ENCODE measurements at regions of chr17 and their contacts with region 1.

Region 1: GRCh38 chr17:2282297-2282873 is 21.2 kb downstream of the SMG6 start:
- DNase-seq: no peak
- H3K4me3 ChIP-seq: no peak overlapping the region
- H3K27ac ChIP-seq: no peak overlapping the region
- H3K4me1 ChIP-seq: no peaks in the 10 kb centered on the region
- H3K27me3 ChIP-seq: no peaks in the 10 kb centered on the region
- CTCF ChIP-seq: peak; percentile 26 to 54 (median 51)
- EP300 ChIP-seq: no peak
- POLR2A ChIP-seq: no peak

Region 2: GRCh38 chr17:1908699-1909309 is 373.6 kb before region 1 on chr17:
- intact Hi-C with region 1: loop called in 2 of 4 experiments (anchors 5 kb)
- DNase-seq: peak; percentile 62 to 75 (median 66)
- H3K4me3 ChIP-seq: no peak overlapping the region
- H3K27ac ChIP-seq: no peak overlapping the region
- H3K4me1 ChIP-seq: peaks cover 6% of the 10 kb centered on the region
- H3K27me3 ChIP-seq: no peaks in the 10 kb centered on the region
- CTCF ChIP-seq: peak; percentile 54 to 77 (median 63)
- EP300 ChIP-seq: no peak
- POLR2A ChIP-seq: no peak

Region 3: GRCh38 chr17:2054512-2055291 is 227.7 kb before region 1 on chr17 and contains the start of gene HIC1:
- intact Hi-C with region 1: loop called in 1 of 4 experiments (anchors 5 kb)
- DNase-seq: peak; percentile 81 to 90 (median 87)
- H3K4me3 ChIP-seq: peak within 1 kb of the TSS; percentile 41
- H3K27ac ChIP-seq: peak within 1 kb of the TSS; percentile 89 to 98
- H3K4me1 ChIP-seq: peaks cover 8% of the 10 kb centered on the region
- H3K27me3 ChIP-seq: no peaks in the 10 kb centered on the region
- CTCF ChIP-seq: peak; percentile 98 to 99 (median 99)
- EP300 ChIP-seq: no peak
- POLR2A ChIP-seq: peak; percentile 84
- total RNA-seq, gene HIC1: 35.0 to 108 (median 68.0) TPM

Region 4: DNA sequence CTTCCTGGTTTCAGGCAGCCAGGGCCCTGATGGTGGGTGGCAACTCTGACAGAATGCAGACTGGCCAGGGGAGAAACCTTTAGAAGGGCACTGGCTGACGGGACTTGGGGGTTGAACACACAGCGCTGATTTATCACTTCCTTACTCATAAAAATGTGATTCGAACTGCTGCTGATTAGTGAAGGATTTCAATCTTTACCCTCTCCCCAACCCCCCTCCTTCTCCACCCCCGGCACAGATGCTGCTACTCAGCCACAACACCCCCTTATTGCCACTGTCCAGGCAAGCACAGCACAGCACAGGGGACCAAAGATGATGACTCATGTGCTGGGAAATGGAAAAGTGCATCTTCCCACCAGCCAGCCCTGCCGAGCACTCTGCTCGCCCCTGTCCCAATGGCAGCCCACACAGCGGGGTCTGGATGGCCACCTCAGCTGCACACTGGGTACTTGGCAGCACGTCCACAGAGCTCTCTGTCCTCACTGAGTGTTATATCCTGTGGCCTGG is 48.9 kb before region 1 on chr17:
- intact Hi-C with region 1: no loop called
- DNase-seq: peak in 1 of 5 donors; percentile 24
- H3K4me3 ChIP-seq: no peak overlapping the region
- H3K27ac ChIP-seq: peak overlapping the region in 1 of 2 donors; percentile 50
- H3K4me1 ChIP-seq: peaks cover 30% of the 10 kb centered on the region
- H3K27me3 ChIP-seq: no peaks in the 10 kb centered on the region
- CTCF ChIP-seq: no peak
- EP300 ChIP-seq: no peak
- POLR2A ChIP-seq: no peak

Region 5: GRCh38 chr17:2244545-2245525 is 37.5 kb before region 1 on chr17:
- intact Hi-C with region 1: loop called in 1 of 4 experiments (anchors 5 kb)
- DNase-seq: peak; percentile 87 to 92 (median 90)
- H3K4me3 ChIP-seq: no peak overlapping the region
- H3K27ac ChIP-seq: peak overlapping the region in 1 of 2 donors; percentile 51
- H3K4me1 ChIP-seq: peaks cover 10% of the 10 kb centered on the region
- H3K27me3 ChIP-seq: no peaks in the 10 kb centered on the region
- CTCF ChIP-seq: peak; percentile 96 to 99 (median 98)
- EP300 ChIP-seq: no peak
- POLR2A ChIP-seq: peak; percentile 32